AG04450 (cell line): ENCODE measurements at regions of chr13 and their contacts with region 1.

Region 1: DNA sequence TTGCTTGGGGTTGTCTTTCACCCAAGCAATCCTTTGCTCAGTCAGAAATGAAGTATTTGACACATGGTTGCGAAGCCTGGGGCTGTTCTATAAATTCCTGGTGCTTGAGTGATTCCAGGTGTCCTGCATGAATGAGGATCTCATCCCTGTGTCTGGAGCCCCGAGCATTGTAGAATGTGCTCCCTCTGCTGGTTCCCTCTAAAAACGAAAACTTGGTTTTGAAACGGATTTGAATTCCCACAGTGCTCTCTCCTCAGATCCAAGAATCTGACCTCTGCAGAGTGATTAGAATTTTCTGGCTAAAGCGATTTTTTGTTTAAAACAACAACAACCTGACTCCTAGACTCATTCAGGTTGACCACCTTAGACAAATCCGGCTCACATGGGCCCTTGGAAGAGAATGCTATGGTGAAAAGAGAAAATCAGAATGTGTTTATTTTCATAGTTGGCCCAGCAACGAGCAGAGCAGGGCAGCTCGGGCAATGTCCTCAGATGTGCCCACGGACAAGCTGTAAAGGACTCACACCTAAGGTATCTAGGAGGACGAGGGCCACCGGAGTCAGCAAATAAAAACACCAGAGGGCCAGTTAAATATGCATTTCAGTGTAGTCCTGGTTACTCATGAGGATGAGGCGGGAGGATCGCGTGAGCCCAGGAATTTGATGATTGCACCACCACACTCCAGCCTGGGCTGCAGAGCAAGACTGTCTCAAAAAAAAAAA is 8.7 kb upstream of the ATP12A start:
- DNase-seq: peak; percentile 61
- H3K4me3 ChIP-seq: peak overlapping the region; percentile 47
- H3K27ac ChIP-seq: peak overlapping the region; percentile 82
- H3K27me3 ChIP-seq: peaks cover 17% of the 10 kb centered on the region
- CTCF ChIP-seq: peak; percentile 86

Region 2: DNA sequence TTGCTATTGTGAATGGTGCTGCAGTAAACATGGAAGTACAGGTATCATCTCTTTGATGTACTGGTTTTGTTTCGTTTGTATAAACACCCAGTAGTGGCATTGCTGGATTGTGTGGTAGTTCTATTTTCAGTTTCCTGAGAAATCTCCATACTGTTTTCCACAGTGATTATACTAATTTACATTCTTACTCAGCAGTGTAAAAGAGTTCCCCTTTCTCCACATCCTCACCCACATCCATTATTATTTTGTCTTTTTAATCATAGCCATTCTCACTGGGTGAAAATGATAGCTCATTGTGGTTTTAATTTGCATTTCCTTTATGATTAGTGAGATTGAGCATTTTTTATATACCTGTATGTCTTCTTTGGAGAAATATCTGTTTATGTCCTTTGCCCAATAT is 96.7 kb before region 1 on chr13:
- CTCF ChIA-PET with region 1: interaction called, 15 read pairs
- POLR2A ChIA-PET with region 1: no interaction called
- DNase-seq: no peak
- H3K4me3 ChIP-seq: no peak overlapping the region
- H3K27ac ChIP-seq: no peak overlapping the region
- H3K27me3 ChIP-seq: no peaks in the 10 kb centered on the region
- CTCF ChIP-seq: no peak

Region 3: DNA sequence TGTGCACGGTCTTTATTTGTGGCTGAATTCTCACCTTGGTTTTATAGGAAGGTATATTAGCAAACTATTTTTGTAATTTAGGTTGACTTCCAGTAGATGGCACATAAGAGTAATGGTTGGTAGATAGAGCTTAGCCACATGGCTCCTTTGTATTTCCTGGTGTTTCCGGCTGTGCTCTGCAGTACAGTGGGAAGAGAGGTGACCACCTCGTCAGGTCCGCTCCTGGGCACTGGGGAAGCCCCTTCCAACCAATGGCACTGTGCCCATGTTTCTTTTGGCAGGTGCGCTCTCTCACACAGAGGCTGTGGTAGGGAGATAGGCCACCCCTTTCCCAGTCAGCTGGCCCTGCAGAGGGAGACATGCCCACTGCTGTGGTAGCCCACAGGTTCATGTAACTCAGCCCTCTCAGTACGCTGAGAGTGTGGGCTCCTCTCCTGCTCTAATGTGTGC is 65.6 kb before region 1 on chr13:
- CTCF ChIA-PET with region 1: interaction called, 27 read pairs
- POLR2A ChIA-PET with region 1: no interaction called
- DNase-seq: no peak
- H3K4me3 ChIP-seq: no peak overlapping the region
- H3K27ac ChIP-seq: no peak overlapping the region
- H3K27me3 ChIP-seq: peaks cover under 1% of the 10 kb centered on the region
- CTCF ChIP-seq: peak; percentile 41

Region 4: DNA sequence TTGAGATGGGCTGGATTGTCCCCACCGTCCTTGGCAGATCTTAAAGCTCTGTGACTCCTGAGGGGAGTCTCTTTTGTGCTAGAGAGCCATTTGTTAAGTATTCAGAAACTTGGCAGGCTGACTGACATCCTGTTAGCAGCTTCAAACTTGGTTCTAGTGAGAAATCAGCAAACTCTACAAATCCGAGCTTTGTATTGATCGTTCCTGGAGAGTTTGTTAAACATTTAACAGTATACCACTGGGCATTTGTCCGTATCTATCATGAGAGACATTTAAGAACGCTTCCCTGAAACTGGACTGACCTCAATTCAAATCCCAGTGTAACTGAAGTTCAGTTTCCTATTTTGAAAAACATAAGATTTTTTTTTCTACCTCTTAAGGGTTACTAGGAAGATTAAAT is 11.8 kb after region 1 on chr13:
- CTCF ChIA-PET with region 1: interaction called, 16 read pairs
- POLR2A ChIA-PET with region 1: no interaction called
- DNase-seq: no peak
- H3K4me3 ChIP-seq: no peak overlapping the region
- H3K27ac ChIP-seq: no peak overlapping the region
- H3K27me3 ChIP-seq: peaks cover 27% of the 10 kb centered on the region
- CTCF ChIP-seq: no peak